ENCODE measurements at regions of chr2 and their contacts with region 1.

Region 1: GRCh38 chr2:218648088-218648786 is 11.2 kb downstream of the ZNF142 start:
- DNase-seq: peak; percentile 70
- ATAC-seq: peak; percentile 96
- H3K4me3 ChIP-seq: no peak overlapping the region
- H3K27ac ChIP-seq: no peak overlapping the region
- H3K4me1 ChIP-seq: no peaks in the 10 kb centered on the region
- H3K27me3 ChIP-seq: no peaks in the 10 kb centered on the region
- CTCF ChIP-seq: peak; percentile 83
- POLR2A ChIP-seq: no peak
- RAD21 ChIP-seq: peak; percentile 84

Region 2: DNA sequence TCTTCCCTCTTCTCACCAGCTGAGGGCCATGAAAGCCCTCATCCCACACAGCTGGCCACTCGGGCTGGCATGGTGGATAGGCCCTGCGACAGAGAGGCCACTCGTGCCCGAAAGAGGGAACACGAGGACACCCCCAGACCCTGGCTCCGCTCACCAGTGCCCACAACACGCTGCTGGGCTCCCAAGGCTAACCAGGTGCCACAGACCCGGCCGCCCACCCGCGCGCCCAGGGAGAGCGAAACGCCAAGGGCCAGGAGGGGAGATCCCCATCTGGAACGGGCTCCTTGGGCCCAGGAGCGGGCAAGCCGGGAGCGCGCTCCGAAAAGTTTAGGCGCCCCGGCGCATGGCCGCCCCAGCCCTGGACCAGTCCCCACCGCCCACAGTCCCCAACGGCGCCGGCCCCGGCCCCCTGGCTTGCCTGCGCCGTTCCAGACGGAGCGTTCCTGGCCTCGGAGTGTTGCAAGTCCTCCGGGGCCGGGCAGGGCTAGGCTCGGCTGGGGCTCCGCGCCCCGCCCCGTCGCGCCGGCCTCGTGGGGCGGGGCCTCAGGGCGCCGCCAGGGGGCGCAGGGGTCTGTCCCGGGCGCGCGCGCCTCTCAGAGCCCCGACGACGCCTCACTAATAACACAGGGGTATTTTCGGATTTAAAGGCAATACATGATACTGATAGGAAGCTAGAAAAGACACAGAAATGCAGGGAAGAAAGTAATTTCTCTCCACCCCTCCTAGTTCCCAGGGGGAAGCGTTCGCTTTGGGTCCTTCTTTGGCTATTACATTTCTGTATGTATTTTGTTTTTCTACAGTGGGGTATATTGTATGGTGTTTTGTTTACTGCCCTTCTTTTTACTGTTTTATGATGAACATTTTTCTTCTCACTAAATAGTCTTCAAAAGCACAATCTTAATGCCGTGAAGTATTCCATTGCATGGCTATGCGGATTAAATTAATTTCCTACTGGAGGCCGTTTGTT is 355.9 kb before region 1 on chr2 and contains the start of gene TMBIM1:
- CTCF ChIA-PET with region 1: no interaction called
- POLR2A ChIA-PET with region 1: no interaction called
- dilution Hi-C with region 1: no loop called
- in situ Hi-C with region 1: no loop called
- intact Hi-C with region 1: loop called (anchors 5 kb)
- DNase-seq: peak; percentile 58
- ATAC-seq: peak; percentile 93
- H3K4me3 ChIP-seq: peak within 1 kb of the TSS; percentile 86
- H3K27ac ChIP-seq: peak within 1 kb of the TSS; percentile 92
- H3K4me1 ChIP-seq: peaks cover 20% of the 10 kb centered on the region
- H3K27me3 ChIP-seq: no peaks in the 10 kb centered on the region
- CTCF ChIP-seq: peak; percentile 93
- POLR2A ChIP-seq: peak; percentile 42; the same call in 1 of the 2 replicates
- RAD21 ChIP-seq: peak; percentile 60
- total RNA-seq, gene TMBIM1: 78.6 and 102 TPM in 2 replicates

Region 3: GRCh38 chr2:218406209-218406948 is 241.9 kb before region 1 on chr2:
- CTCF ChIA-PET with region 1: no interaction called
- POLR2A ChIA-PET with region 1: no interaction called
- dilution Hi-C with region 1: no loop called
- in situ Hi-C with region 1: loop called (anchors 10 kb)
- intact Hi-C with region 1: loop called (anchors 1 kb)
- DNase-seq: peak; percentile 89
- ATAC-seq: peak; percentile 93
- H3K4me3 ChIP-seq: peak overlapping the region; percentile 44
- H3K27ac ChIP-seq: peak overlapping the region; percentile 78
- H3K4me1 ChIP-seq: peaks cover 17% of the 10 kb centered on the region
- H3K27me3 ChIP-seq: no peaks in the 10 kb centered on the region
- CTCF ChIP-seq: peak; percentile 88
- POLR2A ChIP-seq: peak; percentile 42; the same call in 1 of the 2 replicates
- RAD21 ChIP-seq: peak; percentile 79

Region 4: DNA sequence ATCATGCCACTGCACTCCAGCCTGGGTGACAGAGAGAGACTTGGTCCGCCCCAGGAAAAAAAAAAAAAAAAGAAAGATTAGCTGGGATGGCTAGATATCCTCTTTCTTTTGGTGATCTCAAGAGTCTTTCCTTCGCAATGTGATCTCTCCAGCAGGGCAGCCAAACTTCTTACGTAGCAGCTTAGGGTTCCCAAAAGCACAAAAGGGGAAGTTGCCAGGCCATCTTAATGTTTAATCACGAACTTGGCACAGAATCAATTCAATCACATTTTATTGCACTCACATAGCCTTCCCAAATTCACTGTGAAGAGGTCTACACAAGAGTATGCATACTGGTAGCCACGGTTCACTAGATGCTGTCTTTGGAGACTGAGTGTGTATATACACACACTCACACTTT is 176.3 kb before region 1 on chr2:
- CTCF ChIA-PET with region 1: no interaction called
- POLR2A ChIA-PET with region 1: no interaction called
- dilution Hi-C with region 1: no loop called
- in situ Hi-C with region 1: no loop called
- intact Hi-C with region 1: loop called (anchors 10 kb)
- DNase-seq: no peak
- ATAC-seq: no peak
- H3K4me3 ChIP-seq: no peak overlapping the region
- H3K27ac ChIP-seq: no peak overlapping the region
- H3K4me1 ChIP-seq: peaks cover 3% of the 10 kb centered on the region; the same call in 1 of the 2 replicates
- H3K27me3 ChIP-seq: no peaks in the 10 kb centered on the region
- CTCF ChIP-seq: no peak
- POLR2A ChIP-seq: no peak
- RAD21 ChIP-seq: no peak